ENCODE measurements at regions of chr20 and their contacts with region 1.

Region 1: DNA sequence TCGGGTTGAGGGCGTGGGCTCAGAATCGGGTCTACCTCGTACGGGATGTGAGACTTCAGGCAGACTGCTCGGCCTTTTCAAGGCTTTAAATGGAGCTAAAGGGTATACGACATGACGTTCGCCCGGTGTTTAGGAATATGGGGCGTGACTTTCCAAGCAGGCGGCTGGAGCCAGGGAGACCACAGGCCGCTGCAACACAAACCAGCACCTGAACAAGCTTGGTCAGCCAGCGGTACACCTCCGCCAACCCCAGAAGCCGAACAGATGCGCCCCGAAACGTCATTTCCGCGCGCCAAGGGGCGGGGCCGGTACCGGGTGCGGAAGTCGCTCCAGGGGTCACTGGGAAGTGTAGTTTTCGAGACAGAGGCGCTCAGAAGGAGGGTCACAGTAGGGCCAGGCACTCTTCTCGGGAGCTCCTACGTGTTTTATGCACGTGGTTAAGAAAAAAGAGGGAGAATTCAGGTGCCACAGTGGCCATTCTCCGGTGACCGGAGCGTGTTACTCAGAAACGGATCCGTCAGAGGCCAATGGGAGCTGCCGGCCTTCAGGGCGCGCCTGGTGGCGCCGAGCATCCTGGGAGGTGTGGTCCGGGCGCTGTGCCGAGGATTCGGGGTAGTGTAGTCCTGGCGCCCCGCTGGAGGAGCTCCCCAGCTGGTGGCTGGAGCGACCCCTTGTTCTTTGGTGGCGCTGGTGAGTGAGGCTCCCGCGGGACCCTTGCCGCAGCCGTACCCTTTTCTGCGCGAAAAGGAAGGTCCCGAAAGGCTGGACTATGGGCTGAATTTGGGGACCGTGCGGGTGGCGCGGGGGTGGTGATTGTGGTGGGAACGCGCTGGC is at the start of gene ZNF133:
- DNase-seq: peak; percentile 83 to 91 (median 89)
- H3K4me3 ChIP-seq: peak within 1 kb of the TSS; percentile 71 to 89 (median 86)
- H3K4me3 Mint-ChIP-seq: peak within 1 kb of the TSS; percentile 96 to 98
- H3K27ac ChIP-seq: peak within 1 kb of the TSS; percentile 74 to 98
- H3K27ac Mint-ChIP-seq: peak within 1 kb of the TSS; percentile 95 to 100 (median 99)
- H3K4me1 ChIP-seq: peaks cover 11 to 16% of the 10 kb centered on the region in 2 donors
- H3K4me1 Mint-ChIP-seq: peaks cover 16% of the 10 kb centered on the region
- H3K27me3 ChIP-seq: peaks cover 2 to 7% of the 10 kb centered on the region in 2 donors
- H3K27me3 Mint-ChIP-seq: peaks cover 4 to 12% (median 9%) of the 10 kb centered on the region in 3 donors
- CTCF ChIP-seq: no peak
- polyA plus RNA-seq, gene ZNF133: 1.7 to 9.7 (median 3.4) TPM

Region 2: DNA sequence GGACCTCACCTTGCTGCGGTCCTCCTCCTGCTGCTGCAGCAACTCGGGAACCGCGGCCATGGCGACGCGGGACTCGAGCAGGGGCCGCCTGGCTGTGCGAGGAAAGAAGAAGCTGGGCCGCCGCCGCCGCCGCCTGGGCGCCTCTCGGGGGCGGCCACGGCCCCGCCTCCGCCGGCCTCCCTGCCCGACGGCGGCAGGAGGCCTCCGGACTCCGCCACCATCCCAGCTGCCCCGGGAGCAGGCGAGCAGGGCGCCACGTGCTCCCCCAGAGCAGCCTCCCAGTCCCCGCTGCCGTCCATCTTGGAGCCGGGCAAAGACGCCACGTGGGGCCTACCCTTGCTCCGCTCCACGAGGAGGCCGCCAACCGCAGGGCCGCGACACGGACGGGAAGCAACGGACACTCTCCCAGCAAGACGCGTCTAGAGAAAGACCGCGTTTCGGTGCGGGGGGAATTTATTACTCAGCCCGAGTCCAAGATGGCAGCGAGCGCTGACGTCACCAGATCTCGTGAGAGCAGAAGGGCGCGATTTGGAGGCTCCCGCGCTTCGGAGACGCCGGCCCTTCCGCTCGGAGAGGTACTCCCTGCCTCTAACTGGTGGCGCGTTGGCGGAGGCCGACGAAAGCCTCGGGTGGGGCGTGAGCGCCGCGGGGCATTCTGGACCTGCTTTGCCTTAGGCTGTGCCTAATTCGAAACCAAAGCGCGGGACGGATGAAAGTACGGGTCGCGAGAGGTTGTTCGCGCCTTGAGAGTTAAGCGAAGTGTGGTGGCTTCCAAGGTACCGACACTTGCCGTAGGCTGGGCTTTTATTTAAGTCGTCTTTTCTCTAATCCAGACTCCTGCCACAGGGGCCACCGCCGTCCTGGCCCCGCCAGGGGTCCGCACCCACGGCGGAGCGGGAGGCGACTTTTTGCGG is 319.5 kb before region 1 on chr20 and contains the starts of genes MGME1 and SNX5:
- intact Hi-C with region 1: loop called in 1 of 2 experiments (anchors 10 kb)
- DNase-seq: peak; percentile 98 to 99 (median 99)
- H3K4me3 ChIP-seq: peak within 1 kb of the TSS; percentile 83 to 93 (median 92)
- H3K4me3 Mint-ChIP-seq: peak within 1 kb of the TSS; percentile 88 to 99
- H3K27ac ChIP-seq: peak within 1 kb of the TSS; percentile 93 to 97
- H3K27ac Mint-ChIP-seq: peak within 1 kb of the TSS; percentile 97 to 100 (median 99)
- H3K4me1 ChIP-seq: peaks cover 74 to 94% of the 10 kb centered on the region in 2 donors
- H3K4me1 Mint-ChIP-seq: peaks cover 75% of the 10 kb centered on the region
- H3K27me3 ChIP-seq: no peaks in the 10 kb centered on the region
- H3K27me3 Mint-ChIP-seq: no peaks in the 10 kb centered on the region
- CTCF ChIP-seq: no peak
- polyA plus RNA-seq, gene MGME1: 2.5 to 20.1 (median 13.4) TPM
- polyA plus RNA-seq, gene SNX5: 55.6 to 83.8 (median 66.1) TPM

Region 3: GRCh38 chr20:18056174-18057100 is 231.7 kb before region 1 on chr20:
- intact Hi-C with region 1: loop called in 1 of 2 experiments (anchors 5 kb)
- DNase-seq: no peak
- H3K4me3 ChIP-seq: peak overlapping the region; percentile 38 to 77 (median 50)
- H3K4me3 Mint-ChIP-seq: peak overlapping the region; percentile 79 to 88
- H3K27ac ChIP-seq: no peak overlapping the region
- H3K27ac Mint-ChIP-seq: peak overlapping the region in 1 of 7 donors; percentile 35
- H3K4me1 ChIP-seq: peaks cover 48 to 63% of the 10 kb centered on the region in 2 donors
- H3K4me1 Mint-ChIP-seq: peaks cover 48% of the 10 kb centered on the region
- H3K27me3 ChIP-seq: peaks cover 60 to 71% of the 10 kb centered on the region in 2 donors
- H3K27me3 Mint-ChIP-seq: peaks cover 64 to 75% (median 74%) of the 10 kb centered on the region in 3 donors
- CTCF ChIP-seq: no peak

Region 4: DNA sequence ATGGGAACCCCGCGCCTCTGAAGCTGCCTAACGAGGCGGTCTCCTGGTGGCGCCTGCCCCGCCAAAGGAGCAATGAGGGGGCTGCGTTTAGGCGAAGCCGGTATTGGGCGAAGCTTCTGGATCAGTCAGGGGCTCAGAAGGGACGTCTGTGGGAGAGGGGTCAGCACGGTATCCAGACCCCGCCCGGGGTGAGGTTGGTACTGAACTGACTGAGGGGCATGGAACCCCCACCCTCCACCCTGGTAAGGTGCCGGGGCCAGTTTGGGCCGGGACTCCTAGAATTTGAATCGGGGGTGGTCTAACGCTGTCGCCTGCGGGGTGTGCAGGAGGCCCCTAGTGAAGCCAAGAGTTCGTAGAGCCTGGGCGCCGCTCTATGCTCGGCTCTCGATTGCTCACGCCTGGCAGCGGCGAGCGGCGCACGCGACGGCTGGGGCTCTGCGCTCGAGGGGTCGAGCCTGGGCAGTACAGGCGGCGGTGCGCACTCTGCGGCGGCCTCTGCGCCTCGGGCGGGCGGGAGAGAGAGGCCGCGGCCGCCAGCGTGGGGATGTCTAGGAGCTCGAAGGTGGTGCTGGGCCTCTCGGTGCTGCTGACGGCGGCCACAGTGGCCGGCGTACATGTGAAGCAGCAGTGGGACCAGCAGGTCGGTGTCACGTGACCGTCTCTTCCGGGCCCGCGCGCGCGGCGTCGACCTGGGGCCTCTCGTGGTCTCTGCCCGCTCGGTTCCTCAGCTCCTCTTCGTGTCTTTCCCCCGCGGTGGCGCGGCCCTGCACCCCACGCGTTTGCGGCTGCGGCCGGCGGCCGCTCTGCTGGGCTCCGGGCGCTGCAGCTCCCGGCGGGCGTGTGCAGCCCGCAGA is 150.5 kb before region 1 on chr20 and contains the starts of genes KAT14 and PET117:
- intact Hi-C with region 1: loop called (anchors 2 to 5 kb)
- DNase-seq: peak; percentile 80 to 89 (median 88)
- H3K4me3 ChIP-seq: peak within 1 kb of the TSS; percentile 48 to 99 (median 97)
- H3K4me3 Mint-ChIP-seq: peak within 1 kb of the TSS; percentile 94
- H3K27ac ChIP-seq: peak within 1 kb of the TSS; percentile 73 to 95
- H3K27ac Mint-ChIP-seq: peak within 1 kb of the TSS; percentile 78 to 93 (median 89)
- H3K4me1 ChIP-seq: peaks cover 16 to 25% of the 10 kb centered on the region in 2 donors
- H3K4me1 Mint-ChIP-seq: peaks cover 26% of the 10 kb centered on the region
- H3K27me3 ChIP-seq: no peaks in the 10 kb centered on the region
- H3K27me3 Mint-ChIP-seq: peaks cover 0 to 4% (median 3%) of the 10 kb centered on the region in 3 donors
- CTCF ChIP-seq: no peak
- polyA plus RNA-seq, gene KAT14: 3.4 to 6.0 (median 5.7) TPM
- polyA plus RNA-seq, gene PET117: 3.9 to 19.5 (median 16.6) TPM

Region 5: GRCh38 chr20:18466894-18467730 is 179.0 kb after region 1 on chr20 and contains the starts of genes DZANK1 and POLR3F:
- intact Hi-C with region 1: loop called in 1 of 2 experiments (anchors 10 kb)
- DNase-seq: peak; percentile 89 to 92 (median 90)
- H3K4me3 ChIP-seq: peak within 1 kb of the TSS; percentile 45 to 100 (median 70)
- H3K4me3 Mint-ChIP-seq: peak within 1 kb of the TSS; percentile 97 to 98
- H3K27ac ChIP-seq: peak within 1 kb of the TSS; percentile 43 to 92
- H3K27ac Mint-ChIP-seq: peak within 1 kb of the TSS; percentile 93 to 99 (median 97)
- H3K4me1 ChIP-seq: peaks cover 14 to 22% of the 10 kb centered on the region in 2 donors
- H3K4me1 Mint-ChIP-seq: peaks cover 15% of the 10 kb centered on the region
- H3K27me3 ChIP-seq: no peaks in the 10 kb centered on the region
- H3K27me3 Mint-ChIP-seq: peaks cover 0 to 2% (median 0%) of the 10 kb centered on the region in 3 donors
- CTCF ChIP-seq: no peak
- polyA plus RNA-seq, gene DZANK1: 0.17 to 1.3 (median 0.69) TPM
- polyA plus RNA-seq, gene POLR3F: 4.1 to 6.7 (median 4.8) TPM

Region 6: GRCh38 chr20:18587665-18588573 is 299.8 kb after region 1 on chr20 and contains the start of gene DTD1:
- intact Hi-C with region 1: loop called (anchors 5 to 10 kb)
- DNase-seq: peak; percentile 87 to 90 (median 88)
- H3K4me3 ChIP-seq: peak within 1 kb of the TSS; percentile 75 to 94 (median 77)
- H3K4me3 Mint-ChIP-seq: peak within 1 kb of the TSS; percentile 89 to 91
- H3K27ac ChIP-seq: peak within 1 kb of the TSS; percentile 16 to 58
- H3K27ac Mint-ChIP-seq: peak within 1 kb of the TSS in 6 of 7 donors; percentile 63 to 89 (median 85)
- H3K4me1 ChIP-seq: peaks cover 13 to 14% of the 10 kb centered on the region in 2 donors
- H3K4me1 Mint-ChIP-seq: peaks cover 15% of the 10 kb centered on the region
- H3K27me3 ChIP-seq: no peaks in the 10 kb centered on the region
- H3K27me3 Mint-ChIP-seq: peaks cover 2 to 7% (median 3%) of the 10 kb centered on the region in 3 donors
- CTCF ChIP-seq: peak; percentile 72
- polyA plus RNA-seq, gene DTD1: 18.8 to 33.6 (median 26.3) TPM

Region 7: GRCh38 chr20:18793625-18794427 is 505.7 kb after region 1 on chr20:
- intact Hi-C with region 1: loop called (anchors 5 kb)
- DNase-seq: peak; percentile 90 to 97 (median 94)
- H3K4me3 ChIP-seq: peak overlapping the region; percentile 87 to 96 (median 91)
- H3K4me3 Mint-ChIP-seq: peak overlapping the region; percentile 85 to 95
- H3K27ac ChIP-seq: peak overlapping the region; percentile 71 to 98
- H3K27ac Mint-ChIP-seq: peak overlapping the region; percentile 94 to 99 (median 98)
- H3K4me1 ChIP-seq: peaks cover 6% of the 10 kb centered on the region in 2 donors
- H3K4me1 Mint-ChIP-seq: peaks cover 8% of the 10 kb centered on the region
- H3K27me3 ChIP-seq: peaks cover 0 to 11% of the 10 kb centered on the region in 2 donors
- H3K27me3 Mint-ChIP-seq: peaks cover 0 to 22% (median 7%) of the 10 kb centered on the region in 3 donors
- CTCF ChIP-seq: no peak